ENCODE measurements at regions of chr15 and their contacts with region 1.

Region 1: GRCh38 chr15:28994831-28995596 is 109.2 kb downstream of the APBA2 start:
- DNase-seq: peak in 2 of 10 donors; percentile 56 to 67
- H3K4me3 ChIP-seq: peak overlapping the region in 32 of 59 donors; percentile 4 to 56 (median 25)
- H3K27ac ChIP-seq: peak overlapping the region; percentile 83 to 99 (median 96)
- H3K27me3 ChIP-seq: no peaks in the 10 kb centered on the region
- CTCF ChIP-seq: peak in 5 of 56 donors; percentile 1 to 23 (median 14)

Region 2: GRCh38 chr15:29008846-29009245 is 13.8 kb after region 1 on chr15:
- intact Hi-C with region 1: no loop called
- DNase-seq: no peak
- H3K4me3 ChIP-seq: no peak overlapping the region
- H3K27ac ChIP-seq: peak overlapping the region in 14 of 59 donors; percentile 1 to 54 (median 26)
- H3K27me3 ChIP-seq: no peaks in the 10 kb centered on the region
- CTCF ChIP-seq: no peak

Region 3: GRCh38 chr15:29029651-29030195 is 34.7 kb after region 1 on chr15:
- intact Hi-C with region 1: no loop called
- DNase-seq: no peak
- H3K4me3 ChIP-seq: no peak overlapping the region
- H3K27ac ChIP-seq: no peak overlapping the region
- H3K27me3 ChIP-seq: no peaks in the 10 kb centered on the region
- CTCF ChIP-seq: no peak

Region 4: GRCh38 chr15:29040370-29040751 is 45.3 kb after region 1 on chr15:
- intact Hi-C with region 1: loop called (anchors 5 kb)
- DNase-seq: peak in 3 of 10 donors; percentile 33 to 61 (median 47)
- H3K4me3 ChIP-seq: peak overlapping the region in 1 of 59 donors; percentile 1
- H3K27ac ChIP-seq: peak overlapping the region in 52 of 59 donors; percentile 24 to 99 (median 93)
- H3K27me3 ChIP-seq: no peaks in the 10 kb centered on the region
- CTCF ChIP-seq: no peak

Region 5: GRCh38 chr15:29070449-29071231 is 75.6 kb after region 1 on chr15:
- intact Hi-C with region 1: loop called in 1 of 2 experiments (anchors 2 kb)
- DNase-seq: peak in 3 of 10 donors; percentile 40 to 71 (median 46)
- H3K4me3 ChIP-seq: peak overlapping the region in 58 of 59 donors; percentile 1 to 67 (median 40)
- H3K27ac ChIP-seq: peak overlapping the region; percentile 76 to 99 (median 94)
- H3K27me3 ChIP-seq: no peaks in the 10 kb centered on the region
- CTCF ChIP-seq: no peak

Region 6: GRCh38 chr15:29162411-29162810 is 167.4 kb after region 1 on chr15:
- intact Hi-C with region 1: no loop called
- DNase-seq: no peak
- H3K4me3 ChIP-seq: no peak overlapping the region
- H3K27ac ChIP-seq: no peak overlapping the region
- H3K27me3 ChIP-seq: no peaks in the 10 kb centered on the region
- CTCF ChIP-seq: no peak